PC-3 (cell line): ENCODE measurements at regions of chr5 and their contacts with region 1.

Region 1: GRCh38 chr5:115460472-115460871 is 84.1 kb downstream of the FEM1C start:
- DNase-seq: peak; percentile 95
- ATAC-seq: peak; percentile 72
- H3K4me3 ChIP-seq: peak overlapping the region; percentile 55
- H3K27ac ChIP-seq: peak overlapping the region; percentile 99
- H3K4me1 ChIP-seq: peaks cover 51% of the 10 kb centered on the region
- H3K27me3 ChIP-seq: no peaks in the 10 kb centered on the region
- CTCF ChIP-seq: no peak

Region 2: DNA sequence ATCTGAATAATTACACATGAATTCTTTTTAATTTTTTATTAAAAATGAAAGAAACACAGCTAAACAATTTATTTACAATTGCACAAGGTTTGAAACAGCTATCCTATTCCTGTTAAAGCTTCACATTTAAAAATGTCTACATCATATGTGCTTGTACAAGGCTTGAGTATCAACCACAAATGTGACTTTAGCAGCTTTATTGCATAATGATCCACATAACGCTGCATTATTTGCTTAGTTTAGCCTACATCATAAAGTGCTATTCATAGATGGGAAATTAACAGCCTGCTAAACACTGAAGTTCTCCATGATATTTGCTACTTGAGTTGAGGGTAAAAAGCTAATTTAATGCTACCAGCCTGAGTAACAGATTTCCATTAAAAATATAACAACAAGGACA is 335.7 kb before region 1 on chr5:
- CTCF ChIA-PET with region 1: no interaction called
- POLR2A ChIA-PET with region 1: no interaction called
- intact Hi-C with region 1: no loop called
- DNase-seq: no peak
- ATAC-seq: no peak
- H3K4me3 ChIP-seq: no peak overlapping the region
- H3K27ac ChIP-seq: no peak overlapping the region
- H3K4me1 ChIP-seq: no peaks in the 10 kb centered on the region
- H3K27me3 ChIP-seq: no peaks in the 10 kb centered on the region
- CTCF ChIP-seq: no peak

Region 3: DNA sequence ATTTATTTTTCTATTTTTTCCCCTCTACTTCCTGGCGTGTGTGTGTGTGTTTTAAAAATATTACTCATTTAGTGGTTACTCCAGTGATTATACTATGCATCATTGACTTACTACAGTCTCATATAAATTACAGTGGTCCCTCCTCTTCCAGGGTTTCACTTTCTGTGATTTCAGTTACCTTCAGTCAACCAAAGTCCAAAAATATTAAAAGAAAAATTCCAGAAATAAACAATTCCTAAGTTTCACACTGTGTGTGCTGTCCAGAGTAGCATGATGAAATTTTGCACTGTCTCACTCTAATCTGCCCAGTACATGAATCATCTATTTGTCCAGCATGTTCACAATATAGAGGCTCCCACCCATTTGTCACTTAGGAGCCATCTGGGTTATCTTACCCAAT is 116.6 kb before region 1 on chr5:
- CTCF ChIA-PET with region 1: interaction called, 3 read pairs
- POLR2A ChIA-PET with region 1: no interaction called
- intact Hi-C with region 1: loop called (anchors 1 kb)
- DNase-seq: peak; percentile 57
- ATAC-seq: peak; percentile 92
- H3K4me3 ChIP-seq: no peak overlapping the region
- H3K27ac ChIP-seq: peak overlapping the region; percentile 37
- H3K4me1 ChIP-seq: peaks cover 18% of the 10 kb centered on the region
- H3K27me3 ChIP-seq: no peaks in the 10 kb centered on the region
- CTCF ChIP-seq: no peak

Region 4: GRCh38 chr5:115414406-115415142 is 45.9 kb before region 1 on chr5:
- CTCF ChIA-PET with region 1: no interaction called
- POLR2A ChIA-PET with region 1: interaction called, 13 read pairs
- intact Hi-C with region 1: no loop called
- DNase-seq: no peak
- ATAC-seq: no peak; the same call in 1 of the 2 replicates
- H3K4me3 ChIP-seq: no peak overlapping the region
- H3K27ac ChIP-seq: peak overlapping the region; percentile 58
- H3K4me1 ChIP-seq: peaks cover 32% of the 10 kb centered on the region
- H3K27me3 ChIP-seq: no peaks in the 10 kb centered on the region
- CTCF ChIP-seq: no peak

Region 5: GRCh38 chr5:115496936-115497576 is 36.6 kb after region 1 on chr5:
- CTCF ChIA-PET with region 1: no interaction called
- POLR2A ChIA-PET with region 1: interaction called, 11 read pairs
- intact Hi-C with region 1: no loop called
- DNase-seq: no peak
- ATAC-seq: no peak
- H3K4me3 ChIP-seq: no peak overlapping the region
- H3K27ac ChIP-seq: no peak overlapping the region
- H3K4me1 ChIP-seq: no peaks in the 10 kb centered on the region
- H3K27me3 ChIP-seq: no peaks in the 10 kb centered on the region
- CTCF ChIP-seq: no peak

Region 6: GRCh38 chr5:115544436-115545350 is 84.2 kb after region 1 on chr5 and contains the start of gene FEM1C:
- CTCF ChIA-PET with region 1: interaction called, 3 read pairs
- POLR2A ChIA-PET with region 1: interaction called, 4 read pairs
- intact Hi-C with region 1: loop called (anchors 1 kb)
- DNase-seq: peak; percentile 95
- ATAC-seq: peak; percentile 95
- H3K4me3 ChIP-seq: peak within 1 kb of the TSS; percentile 79
- H3K27ac ChIP-seq: peak within 1 kb of the TSS; percentile 69
- H3K4me1 ChIP-seq: peaks cover 16% of the 10 kb centered on the region; the same call in 1 of the 2 replicates
- H3K27me3 ChIP-seq: no peaks in the 10 kb centered on the region
- CTCF ChIP-seq: no peak
- total RNA-seq, gene FEM1C: 8.4 and 9.1 TPM in 2 replicates